ENCODE measurements at regions of chr7 and their contacts with region 1.

Region 1: DNA sequence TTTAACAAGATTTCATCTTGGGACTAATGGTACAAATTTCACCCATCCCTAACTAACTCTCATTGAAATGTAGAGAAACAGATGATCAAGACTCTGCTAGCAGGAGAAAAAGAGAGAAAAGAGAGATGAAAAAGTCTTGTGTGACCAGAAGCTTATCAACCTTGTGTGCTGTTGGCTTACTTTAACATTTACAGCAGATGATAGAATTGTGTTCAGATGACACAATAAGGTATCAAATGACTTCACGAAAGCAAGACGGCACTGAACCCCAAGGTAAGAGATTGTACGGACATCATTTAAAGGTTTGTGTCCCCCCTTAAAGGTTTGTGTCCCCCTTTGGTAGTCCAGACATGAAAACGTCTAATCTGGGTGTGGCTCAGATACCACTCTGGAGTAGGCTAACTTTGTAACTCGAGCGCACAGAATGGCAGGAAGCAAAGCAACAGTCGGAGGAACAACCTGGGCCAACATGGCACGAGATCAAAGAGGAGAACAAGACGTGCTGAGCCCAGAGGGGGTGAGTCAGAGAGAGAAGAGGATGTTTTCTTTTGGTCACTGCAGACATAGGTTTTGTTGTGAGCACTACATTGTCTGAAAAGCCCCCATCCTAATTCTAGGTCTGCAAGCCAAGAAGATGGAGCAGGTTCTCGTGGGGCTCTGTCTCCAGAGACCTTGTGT is 10.4 kb upstream of the LMBR1 start:
- DNase-seq: no peak
- H3K4me3 ChIP-seq: no peak overlapping the region
- H3K27ac ChIP-seq: no peak overlapping the region
- H3K4me1 ChIP-seq: peaks cover 0 to 5% of the 10 kb centered on the region in 2 experiments; a peak in 1 of 4 replicates
- H3K27me3 ChIP-seq: no peaks in the 10 kb centered on the region
- CTCF ChIP-seq: no peak
- EP300 ChIP-seq: no peak
- RAD21 ChIP-seq: no peak

Region 2: GRCh38 chr7:156892821-156893706 is 10.3 kb before region 1 on chr7 and contains the start of gene LMBR1:
- CTCF ChIA-PET with region 1: interaction called, 23 read pairs
- POLR2A ChIA-PET with region 1: interaction called, 10 read pairs
- DNase-seq: peak; percentile 100
- H3K4me3 ChIP-seq: peak within 1 kb of the TSS; percentile 82 to 98
- H3K27ac ChIP-seq: peak within 1 kb of the TSS; percentile 61 to 87
- H3K4me1 ChIP-seq: peaks cover 6 to 9% of the 10 kb centered on the region in 2 experiments; a peak in 3 of 4 replicates
- H3K27me3 ChIP-seq: no peaks in the 10 kb centered on the region
- CTCF ChIP-seq: peak; percentile 64
- EP300 ChIP-seq: no peak
- RAD21 ChIP-seq: no peak
- polyA plus RNA-seq, gene LMBR1: 20.0 and 24.6 TPM in 2 replicates